ENCODE measurements at regions of chr14 and their contacts with region 1.

Region 1: GRCh38 chr14:54566410-54567223 is at the start of gene SAMD4A:
- DNase-seq: no peak
- ATAC-seq: peak; percentile 56
- H3K4me3 ChIP-seq: peak within 1 kb of the TSS; percentile 61 to 73
- H3K27ac ChIP-seq: peak within 1 kb of the TSS; percentile 74
- H3K4me1 ChIP-seq: peaks cover 10 to 50% of the 10 kb centered on the region in 2 experiments
- H3K27me3 ChIP-seq: no peaks in the 10 kb centered on the region
- CTCF ChIP-seq: peak in 2 of 3 experiments; percentile 17 to 27; a peak in 1 of 6 replicates
- POLR2A ChIP-seq: peak; percentile 14
- RAD21 ChIP-seq: peak; percentile 40
- total RNA-seq, gene SAMD4A: 9.0 TPM

Region 2: GRCh38 chr14:54509546-54510501 is 56.8 kb before region 1 on chr14 and contains the start of gene CGRRF1:
- CTCF ChIA-PET with region 1: interaction called, 10 read pairs
- POLR2A ChIA-PET with region 1: interaction called, 5 read pairs
- RAD21 ChIA-PET with region 1: no interaction called
- intact Hi-C with region 1: no loop called
- DNase-seq: peak; percentile 96
- ATAC-seq: peak; percentile 99
- H3K4me3 ChIP-seq: peak within 1 kb of the TSS; percentile 60 to 84
- H3K27ac ChIP-seq: peak within 1 kb of the TSS; percentile 49; the same call in 1 of the 2 replicates
- H3K4me1 ChIP-seq: peaks cover 5 to 18% of the 10 kb centered on the region in 2 experiments; a peak in 3 of 4 replicates
- H3K27me3 ChIP-seq: no peaks in the 10 kb centered on the region
- CTCF ChIP-seq: peak in 1 of 3 experiments; percentile 19; a peak in 2 of 6 replicates
- POLR2A ChIP-seq: peak; percentile 66
- RAD21 ChIP-seq: no peak
- total RNA-seq, gene CGRRF1: 15.9 TPM

Region 3: DNA sequence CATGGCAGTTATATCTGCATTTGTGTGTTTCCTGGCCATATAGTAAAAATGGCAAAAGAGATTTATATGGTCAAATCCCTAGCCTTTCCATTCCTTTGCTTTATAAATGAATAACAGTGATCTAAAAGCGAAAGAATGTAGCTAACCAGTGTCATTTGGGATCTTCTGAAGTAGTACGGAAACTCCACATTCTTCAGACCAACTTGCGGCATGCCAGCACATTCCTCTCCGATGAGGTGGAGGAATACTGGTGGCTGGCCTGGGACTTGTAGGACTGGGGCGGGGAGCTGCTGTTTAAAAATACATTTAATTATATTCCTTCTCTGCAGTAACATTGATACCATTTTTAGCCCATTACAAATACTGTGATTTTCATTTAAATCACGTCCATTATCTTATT is 85.6 kb after region 1 on chr14:
- CTCF ChIA-PET with region 1: no interaction called
- POLR2A ChIA-PET with region 1: no interaction called
- RAD21 ChIA-PET with region 1: no interaction called
- intact Hi-C with region 1: loop called (anchors 5 kb)
- DNase-seq: peak; percentile 86
- ATAC-seq: peak; percentile 95
- H3K4me3 ChIP-seq: peak overlapping the region; percentile 23 to 47
- H3K27ac ChIP-seq: peak overlapping the region; percentile 76; the same call in 1 of the 2 replicates
- H3K4me1 ChIP-seq: peaks cover 52 to 61% of the 10 kb centered on the region in 2 experiments
- H3K27me3 ChIP-seq: no peaks in the 10 kb centered on the region
- CTCF ChIP-seq: no peak
- POLR2A ChIP-seq: no peak
- RAD21 ChIP-seq: 0 out of 2 replicates have a peak, but pooled peaks have one; percentile 4

Region 4: GRCh38 chr14:54691525-54692283 is 125.1 kb after region 1 on chr14:
- CTCF ChIA-PET with region 1: interaction called, 12 read pairs
- POLR2A ChIA-PET with region 1: interaction called, 5 read pairs
- RAD21 ChIA-PET with region 1: interaction called in 1 of 2 experiments, 3 read pairs
- intact Hi-C with region 1: loop called (anchors 1 kb)
- DNase-seq: peak; percentile 53
- ATAC-seq: peak; percentile 98
- H3K4me3 ChIP-seq: no peak overlapping the region
- H3K27ac ChIP-seq: no peak overlapping the region
- H3K4me1 ChIP-seq: no peaks in the 10 kb centered on the region
- H3K27me3 ChIP-seq: no peaks in the 10 kb centered on the region
- CTCF ChIP-seq: peak; percentile 79 to 89 (median 87)
- POLR2A ChIP-seq: no peak
- RAD21 ChIP-seq: peak; percentile 88

Region 5: DNA sequence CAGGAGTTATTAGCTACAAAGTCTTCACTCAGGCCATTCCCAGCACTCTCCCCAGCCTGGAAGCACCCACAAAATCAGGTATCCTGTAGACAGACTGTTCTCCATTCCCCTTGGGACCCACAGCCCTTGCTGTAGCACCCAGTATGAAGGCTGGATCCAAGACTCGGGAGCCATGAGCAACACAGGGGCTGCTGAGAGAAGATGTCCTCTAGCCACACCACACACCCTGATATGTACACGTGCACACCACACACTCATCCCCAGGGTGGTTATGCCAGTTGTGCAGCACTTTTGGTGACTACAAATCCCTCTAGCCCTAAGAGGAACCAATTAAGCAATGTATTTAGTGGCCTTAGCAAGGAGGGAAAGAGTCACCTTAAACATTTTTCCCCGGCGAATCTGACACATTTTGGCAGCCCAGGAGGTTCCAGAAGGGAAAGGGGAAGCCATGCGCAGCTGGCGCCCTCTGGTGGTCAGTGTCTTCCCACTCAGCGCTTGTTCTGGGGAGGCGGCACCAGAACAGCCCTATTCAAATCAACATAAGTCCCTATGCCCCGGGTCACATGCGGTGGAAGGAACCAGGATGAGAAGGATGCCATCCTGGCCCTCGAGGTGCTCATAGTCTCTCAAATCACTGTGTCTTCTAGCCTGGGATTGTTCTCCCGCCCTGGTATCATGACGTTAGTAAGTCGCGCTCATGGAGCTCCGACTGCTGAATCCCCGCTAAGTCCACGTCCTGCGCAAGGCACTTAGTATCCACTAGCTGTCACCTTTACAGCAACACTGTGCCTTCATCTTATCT is 239.1 kb after region 1 on chr14:
- CTCF ChIA-PET with region 1: interaction called, 46 read pairs
- POLR2A ChIA-PET with region 1: interaction called, 5 read pairs
- RAD21 ChIA-PET with region 1: interaction called, 3 read pairs
- intact Hi-C with region 1: loop called (anchors 1 kb)
- DNase-seq: peak; percentile 68
- ATAC-seq: peak; percentile 98
- H3K4me3 ChIP-seq: no peak overlapping the region
- H3K27ac ChIP-seq: no peak overlapping the region
- H3K4me1 ChIP-seq: peaks cover 0 to 5% of the 10 kb centered on the region in 2 experiments; a peak in 1 of 4 replicates
- H3K27me3 ChIP-seq: no peaks in the 10 kb centered on the region
- CTCF ChIP-seq: peak; percentile 89 to 96 (median 89)
- POLR2A ChIP-seq: no peak
- RAD21 ChIP-seq: peak; percentile 91

Region 6: GRCh38 chr14:54893151-54893760 is 326.6 kb after region 1 on chr14:
- CTCF ChIA-PET with region 1: no interaction called
- POLR2A ChIA-PET with region 1: no interaction called
- RAD21 ChIA-PET with region 1: no interaction called
- intact Hi-C with region 1: loop called (anchors 2 kb)
- DNase-seq: peak; percentile 39
- ATAC-seq: peak; percentile 80
- H3K4me3 ChIP-seq: no peak overlapping the region
- H3K27ac ChIP-seq: no peak overlapping the region
- H3K4me1 ChIP-seq: no peaks in the 10 kb centered on the region
- H3K27me3 ChIP-seq: no peaks in the 10 kb centered on the region
- CTCF ChIP-seq: peak; percentile 30 to 83 (median 78); a peak in 5 of 6 replicates
- POLR2A ChIP-seq: no peak
- RAD21 ChIP-seq: peak; percentile 48

Measured in HCT116 (cell line).